ENCODE measurements at regions of chr1 and their contacts with region 1.

Region 1: DNA sequence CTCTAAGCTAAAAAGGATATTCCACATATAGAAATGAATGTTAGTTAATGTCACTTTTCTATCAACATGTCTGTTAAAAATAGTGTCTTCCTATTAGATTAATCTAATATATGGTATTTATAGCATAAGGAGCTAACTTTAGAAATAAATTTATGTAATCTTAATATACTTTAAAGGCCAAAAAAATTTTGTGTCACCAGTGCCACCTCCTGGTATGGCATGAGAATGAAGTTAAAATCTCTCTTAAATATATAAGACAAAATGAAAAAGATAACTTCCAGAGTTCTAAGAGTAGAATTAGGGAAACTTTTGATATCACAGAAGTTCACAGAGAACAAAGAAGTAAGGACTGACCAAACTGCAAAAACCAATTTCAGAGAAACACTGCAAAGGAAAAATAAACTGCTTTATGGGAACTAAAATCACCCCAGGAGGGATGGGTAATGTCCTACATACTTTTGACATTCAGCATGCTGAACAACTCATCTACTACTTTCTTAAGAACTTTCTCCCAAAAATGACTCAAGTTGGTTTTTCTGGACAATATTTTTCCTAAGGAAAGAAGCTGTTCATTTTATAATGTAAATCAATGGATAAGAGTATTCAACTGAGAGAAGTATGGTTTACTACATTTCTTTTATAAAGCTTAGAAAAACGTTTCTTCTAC is 82.8 kb downstream of the TRIM33 start:
- DNase-seq: peak; percentile 37
- ATAC-seq: peak; percentile 57
- H3K4me3 ChIP-seq: no peak overlapping the region
- H3K27ac ChIP-seq: no peak overlapping the region
- H3K4me1 ChIP-seq: no peaks in the 10 kb centered on the region
- H3K27me3 ChIP-seq: no peaks in the 10 kb centered on the region
- CTCF ChIP-seq: peak; percentile 53
- POLR2A ChIP-seq: no peak
- RAD21 ChIP-seq: peak; percentile 33

Region 2: DNA sequence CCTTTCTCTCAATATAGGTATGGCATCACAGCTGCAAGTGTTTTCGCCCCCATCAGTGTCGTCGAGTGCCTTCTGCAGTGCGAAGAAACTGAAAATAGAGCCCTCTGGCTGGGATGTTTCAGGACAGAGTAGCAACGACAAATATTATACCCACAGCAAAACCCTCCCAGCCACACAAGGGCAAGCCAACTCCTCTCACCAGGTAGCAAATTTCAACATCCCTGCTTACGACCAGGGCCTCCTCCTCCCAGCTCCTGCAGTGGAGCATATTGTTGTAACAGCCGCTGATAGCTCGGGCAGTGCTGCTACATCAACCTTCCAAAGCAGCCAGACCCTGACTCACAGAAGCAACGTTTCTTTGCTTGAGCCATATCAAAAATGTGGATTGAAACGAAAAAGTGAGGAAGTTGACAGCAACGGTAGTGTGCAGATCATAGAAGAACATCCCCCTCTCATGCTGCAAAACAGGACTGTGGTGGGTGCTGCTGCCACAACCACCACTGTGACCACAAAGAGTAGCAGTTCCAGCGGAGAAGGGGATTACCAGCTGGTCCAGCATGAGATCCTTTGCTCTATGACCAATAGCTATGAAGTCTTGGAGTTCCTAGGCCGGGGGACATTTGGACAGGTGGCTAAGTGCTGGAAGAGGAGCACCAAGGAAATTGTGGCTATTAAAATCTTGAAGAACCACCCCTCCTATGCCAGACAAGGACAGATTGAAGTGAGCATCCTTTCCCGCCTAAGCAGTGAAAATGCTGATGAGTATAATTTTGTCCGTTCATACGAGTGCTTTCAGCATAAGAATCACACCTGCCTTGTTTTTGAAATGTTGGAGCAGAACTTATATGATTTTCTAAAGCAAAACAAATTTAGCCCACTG is 487.6 kb before region 1 on chr1:
- CTCF ChIA-PET with region 1: no interaction called
- POLR2A ChIA-PET with region 1: no interaction called
- dilution Hi-C with region 1: no loop called
- in situ Hi-C with region 1: no loop called
- intact Hi-C with region 1: no loop called
- DNase-seq: no peak
- ATAC-seq: no peak
- H3K4me3 ChIP-seq: no peak overlapping the region
- H3K27ac ChIP-seq: no peak overlapping the region
- H3K4me1 ChIP-seq: peaks cover 2% of the 10 kb centered on the region; the same call in 1 of the 2 replicates
- H3K27me3 ChIP-seq: no peaks in the 10 kb centered on the region
- CTCF ChIP-seq: no peak
- POLR2A ChIP-seq: no peak
- RAD21 ChIP-seq: no peak

Region 3: DNA sequence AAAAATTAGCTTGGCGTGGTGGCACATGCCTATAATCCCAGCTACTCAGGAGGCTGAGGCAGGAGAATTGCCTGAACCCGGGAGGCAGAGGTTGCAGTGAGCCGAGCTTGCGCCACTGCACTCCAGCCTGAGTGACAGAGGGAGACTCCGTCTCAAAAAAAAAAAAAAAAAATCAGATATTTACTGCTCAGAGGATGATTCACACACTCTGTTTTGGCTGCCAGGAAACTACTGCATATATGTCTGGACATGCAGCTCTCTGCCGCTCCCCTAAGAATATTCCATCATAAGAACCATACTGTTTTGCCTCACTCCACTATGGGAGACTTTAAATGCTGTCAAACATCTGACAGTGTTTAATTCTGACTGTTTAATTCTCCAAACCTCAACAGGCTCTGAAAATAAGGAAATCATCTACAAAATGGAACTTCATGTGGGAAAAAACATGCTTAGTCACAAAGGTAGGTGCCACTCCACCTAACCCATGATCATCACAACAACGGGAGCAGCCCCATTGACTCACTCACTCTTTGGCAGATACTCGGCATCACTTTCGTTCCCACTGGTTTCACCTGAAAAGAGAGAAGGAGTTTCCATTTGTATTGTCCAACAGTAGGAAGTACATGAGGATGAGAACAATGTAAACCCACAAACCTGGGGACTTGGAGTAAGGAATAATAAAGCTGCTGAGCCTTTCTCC is 182.5 kb after region 1 on chr1:
- CTCF ChIA-PET with region 1: no interaction called
- POLR2A ChIA-PET with region 1: no interaction called
- dilution Hi-C with region 1: no loop called
- in situ Hi-C with region 1: no loop called
- intact Hi-C with region 1: no loop called
- DNase-seq: peak; percentile 58
- ATAC-seq: peak; percentile 72
- H3K4me3 ChIP-seq: no peak overlapping the region
- H3K27ac ChIP-seq: no peak overlapping the region
- H3K4me1 ChIP-seq: no peaks in the 10 kb centered on the region
- H3K27me3 ChIP-seq: no peaks in the 10 kb centered on the region
- CTCF ChIP-seq: no peak
- POLR2A ChIP-seq: no peak
- RAD21 ChIP-seq: no peak

Region 4: GRCh38 chr1:114729782-114730181 is 301.6 kb after region 1 on chr1:
- CTCF ChIA-PET with region 1: no interaction called
- POLR2A ChIA-PET with region 1: no interaction called
- dilution Hi-C with region 1: no loop called
- in situ Hi-C with region 1: no loop called
- intact Hi-C with region 1: loop called (anchors 10 kb)
- DNase-seq: no peak
- ATAC-seq: no peak
- H3K4me3 ChIP-seq: no peak overlapping the region
- H3K27ac ChIP-seq: no peak overlapping the region
- H3K4me1 ChIP-seq: peaks cover 10% of the 10 kb centered on the region
- H3K27me3 ChIP-seq: no peaks in the 10 kb centered on the region
- CTCF ChIP-seq: no peak
- POLR2A ChIP-seq: no peak
- RAD21 ChIP-seq: no peak